ENCODE measurements at regions of chr6 and their contacts with region 1.

Region 1: GRCh38 chr6:132054525-132054924 is 103.4 kb upstream of the CCN2 start:
- DNase-seq: peak; percentile 90
- ATAC-seq: peak; percentile 60
- H3K4me3 ChIP-seq: no peak overlapping the region
- H3K27ac ChIP-seq: peak overlapping the region; percentile 100
- H3K4me1 ChIP-seq: peaks cover 11% of the 10 kb centered on the region
- H3K27me3 ChIP-seq: no peaks in the 10 kb centered on the region
- CTCF ChIP-seq: no peak
- POLR2A ChIP-seq: no peak
- RAD21 ChIP-seq: no peak

Region 2: DNA sequence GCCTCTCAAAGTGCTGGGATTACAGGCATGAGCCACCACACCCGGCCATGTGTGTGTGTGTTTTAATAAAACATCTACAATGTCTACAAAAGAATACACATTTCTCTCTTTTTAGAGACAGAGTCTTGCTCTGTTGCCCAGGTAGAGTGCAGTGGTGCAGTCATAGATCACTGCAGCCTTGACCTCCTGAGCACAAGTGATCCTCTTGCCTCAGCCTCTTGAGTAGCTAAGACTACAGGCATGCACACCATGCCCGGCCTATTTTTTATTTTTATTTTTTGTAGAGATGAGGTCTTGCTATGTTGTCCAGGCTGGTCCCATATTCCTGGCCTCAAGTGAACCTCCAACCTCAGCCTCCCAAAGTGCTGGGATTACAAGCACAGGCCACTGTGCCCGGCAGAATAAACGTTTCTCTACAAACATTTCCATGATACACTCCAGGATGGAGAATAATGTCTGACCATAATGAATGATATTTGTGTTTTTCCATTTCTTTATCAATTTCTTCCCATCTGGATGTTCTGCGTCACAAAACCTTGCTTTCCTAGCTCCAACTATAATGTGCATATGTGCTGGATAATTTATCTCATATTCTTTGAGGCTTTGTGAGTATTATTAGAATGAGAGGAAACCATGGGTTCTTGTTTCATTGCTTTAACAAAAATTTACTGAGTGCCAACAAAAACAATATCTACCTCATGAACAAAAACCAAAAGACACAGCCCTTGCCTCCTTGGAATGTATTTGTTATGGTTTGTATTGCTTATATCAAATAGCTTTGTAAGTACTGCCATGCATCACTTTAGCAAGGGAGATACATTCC is 74.8 kb before region 1 on chr6:
- CTCF ChIA-PET with region 1: no interaction called
- POLR2A ChIA-PET with region 1: no interaction called
- dilution Hi-C with region 1: no loop called
- in situ Hi-C with region 1: no loop called
- intact Hi-C with region 1: no loop called
- DNase-seq: peak; percentile 97
- ATAC-seq: peak; percentile 70
- H3K4me3 ChIP-seq: no peak overlapping the region
- H3K27ac ChIP-seq: peak overlapping the region; percentile 85
- H3K4me1 ChIP-seq: peaks cover 19% of the 10 kb centered on the region
- H3K27me3 ChIP-seq: no peaks in the 10 kb centered on the region
- CTCF ChIP-seq: no peak
- POLR2A ChIP-seq: no peak
- RAD21 ChIP-seq: no peak

Region 3: DNA sequence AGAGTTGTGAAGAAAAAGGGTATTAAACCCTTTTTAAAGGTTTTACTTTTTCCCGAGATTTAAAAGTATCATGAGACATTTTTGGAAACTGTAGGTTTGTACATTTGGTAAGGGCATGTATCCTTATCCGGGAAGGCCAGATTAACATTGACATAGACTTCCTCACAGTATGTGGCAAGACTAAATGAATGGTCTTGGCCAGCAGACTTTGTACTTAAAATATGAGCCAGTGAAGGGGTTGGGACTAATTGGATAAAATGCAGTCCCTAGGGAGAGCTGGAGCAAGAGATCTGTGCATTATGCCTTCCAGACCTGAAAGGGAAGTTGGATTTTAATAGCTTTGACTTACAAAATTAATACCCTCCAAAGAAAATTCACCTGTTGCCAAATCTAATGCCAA is 42.9 kb before region 1 on chr6:
- CTCF ChIA-PET with region 1: no interaction called
- POLR2A ChIA-PET with region 1: no interaction called
- dilution Hi-C with region 1: no loop called
- in situ Hi-C with region 1: no loop called
- intact Hi-C with region 1: loop called (anchors 5 kb)
- DNase-seq: no peak
- ATAC-seq: no peak; the same call in 1 of the 2 replicates
- H3K4me3 ChIP-seq: no peak overlapping the region
- H3K27ac ChIP-seq: no peak overlapping the region
- H3K4me1 ChIP-seq: peaks cover 5% of the 10 kb centered on the region
- H3K27me3 ChIP-seq: no peaks in the 10 kb centered on the region
- CTCF ChIP-seq: no peak
- POLR2A ChIP-seq: no peak
- RAD21 ChIP-seq: no peak

Region 4: DNA sequence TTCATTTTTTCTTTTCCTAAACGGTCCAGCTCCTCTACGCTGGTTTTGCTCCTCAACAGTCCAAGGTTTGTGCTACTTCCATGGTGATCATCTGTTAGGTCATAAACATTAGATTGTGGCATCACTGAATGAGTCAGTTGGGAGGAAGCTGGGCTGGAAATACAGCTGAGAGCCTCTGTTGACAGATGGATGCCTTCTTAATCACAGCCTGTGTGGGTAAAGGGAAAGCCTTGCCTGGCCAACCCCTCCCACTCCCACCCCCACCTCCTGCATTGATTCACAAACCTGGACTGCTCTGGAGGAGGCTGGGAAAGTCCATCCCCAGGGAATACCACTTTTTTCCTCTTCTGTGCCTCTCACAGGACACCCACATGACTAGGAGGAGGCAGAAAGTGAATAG is 77.2 kb after region 1 on chr6:
- CTCF ChIA-PET with region 1: no interaction called
- POLR2A ChIA-PET with region 1: no interaction called
- dilution Hi-C with region 1: no loop called
- in situ Hi-C with region 1: loop called (anchors 5 kb)
- intact Hi-C with region 1: no loop called
- DNase-seq: peak; percentile 100
- ATAC-seq: peak; percentile 80
- H3K4me3 ChIP-seq: no peak overlapping the region
- H3K27ac ChIP-seq: peak overlapping the region; percentile 96; the same call in 1 of the 2 replicates
- H3K4me1 ChIP-seq: peaks cover 26% of the 10 kb centered on the region
- H3K27me3 ChIP-seq: no peaks in the 10 kb centered on the region
- CTCF ChIP-seq: no peak
- POLR2A ChIP-seq: peak; percentile 60
- RAD21 ChIP-seq: no peak; the same call in 1 of the 2 replicates

Measured in IMR-90 (cell line).